ENCODE measurements at regions of chr14 and their contacts with region 1.

Region 1: GRCh38 chr14:89107626-89108025 is 283.2 kb downstream of the TTC8 start:
- DNase-seq: no peak
- ATAC-seq: no peak
- H3K4me3 ChIP-seq: no peak overlapping the region
- H3K4me3 Mint-ChIP-seq: no peak overlapping the region
- H3K27ac ChIP-seq: no peak overlapping the region
- H3K27ac Mint-ChIP-seq: no peak overlapping the region
- H3K4me1 ChIP-seq: no peaks in the 10 kb centered on the region
- H3K4me1 Mint-ChIP-seq: no peaks in the 10 kb centered on the region
- H3K27me3 ChIP-seq: no peaks in the 10 kb centered on the region
- H3K27me3 Mint-ChIP-seq: peaks cover 12 to 24% (median 18%) of the 10 kb centered on the region in 5 donors

Region 2: GRCh38 chr14:89085737-89086382 is 21.8 kb before region 1 on chr14:
- CTCF ChIA-PET with region 1: no interaction called
- POLR2A ChIA-PET with region 1: no interaction called
- intact Hi-C with region 1: loop called in 1 of 2 experiments (anchors 1 kb)
- DNase-seq: no peak
- ATAC-seq: no peak
- H3K4me3 ChIP-seq: no peak overlapping the region
- H3K4me3 Mint-ChIP-seq: no peak overlapping the region
- H3K27ac ChIP-seq: no peak overlapping the region
- H3K27ac Mint-ChIP-seq: no peak overlapping the region
- H3K4me1 ChIP-seq: no peaks in the 10 kb centered on the region
- H3K4me1 Mint-ChIP-seq: no peaks in the 10 kb centered on the region
- H3K27me3 ChIP-seq: peaks cover 0 to 3% of the 10 kb centered on the region in 2 donors
- H3K27me3 Mint-ChIP-seq: peaks cover 0 to 11% (median 6%) of the 10 kb centered on the region in 5 donors